Endothelial cell of umbilical vein (primary cell): ENCODE measurements at regions of chr2 and their contacts with region 1.

Region 1: DNA sequence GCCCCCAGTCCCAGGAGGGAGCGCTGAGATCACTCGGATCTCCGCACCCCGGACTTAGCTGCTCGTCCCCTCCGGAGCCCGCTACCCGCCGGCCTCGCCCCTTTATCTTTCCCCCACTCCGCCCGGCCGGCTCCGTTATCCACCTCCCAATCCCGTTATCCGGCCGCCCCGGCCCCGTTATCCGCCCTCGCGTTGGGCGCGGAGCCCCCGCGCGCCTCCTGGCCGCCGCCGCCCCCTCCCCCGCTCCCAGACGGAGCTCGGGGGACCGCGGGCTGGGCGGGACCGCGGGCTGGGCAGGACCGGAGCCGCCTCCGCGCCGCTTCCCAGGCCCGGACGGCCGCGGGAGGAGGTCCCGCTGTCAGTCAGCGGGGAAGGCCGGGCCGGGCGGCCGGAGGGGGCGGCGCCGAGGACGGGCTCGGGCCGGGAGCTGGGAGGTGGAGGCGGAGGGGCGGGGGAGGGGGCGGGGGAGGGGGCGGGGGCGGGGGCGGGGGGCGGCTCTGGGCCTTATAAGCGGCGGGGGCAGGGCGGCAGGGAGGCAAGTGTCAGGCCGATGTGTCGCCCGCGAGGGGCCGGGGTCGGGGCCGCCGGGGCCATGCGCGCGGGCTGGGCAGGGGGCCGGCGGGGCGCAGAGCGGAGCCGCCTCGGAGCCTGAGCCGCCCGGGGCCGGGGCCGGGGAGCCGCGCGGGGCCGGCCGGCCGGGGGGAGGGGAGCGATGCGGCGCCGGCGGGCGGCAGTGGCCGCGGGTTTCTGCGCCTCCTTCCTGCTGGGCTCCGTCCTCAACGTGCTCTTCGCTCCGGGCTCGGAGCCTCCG is at the start of gene PKDCC:
- DNase-seq: peak; percentile 62
- H3K4me3 ChIP-seq: peak within 1 kb of the TSS; percentile 42 to 58 (median 51)
- H3K27ac ChIP-seq: no peak within 1 kb of the TSS
- H3K4me1 ChIP-seq: peaks cover 9% of the 10 kb centered on the region
- H3K27me3 ChIP-seq: peaks cover 14 to 21% of the 10 kb centered on the region in 2 experiments
- CTCF ChIP-seq: no peak
- POLR2A ChIP-seq: no peak
- total RNA-seq, gene PKDCC: 5.9 and 6.9 TPM in 2 replicates

Region 2: DNA sequence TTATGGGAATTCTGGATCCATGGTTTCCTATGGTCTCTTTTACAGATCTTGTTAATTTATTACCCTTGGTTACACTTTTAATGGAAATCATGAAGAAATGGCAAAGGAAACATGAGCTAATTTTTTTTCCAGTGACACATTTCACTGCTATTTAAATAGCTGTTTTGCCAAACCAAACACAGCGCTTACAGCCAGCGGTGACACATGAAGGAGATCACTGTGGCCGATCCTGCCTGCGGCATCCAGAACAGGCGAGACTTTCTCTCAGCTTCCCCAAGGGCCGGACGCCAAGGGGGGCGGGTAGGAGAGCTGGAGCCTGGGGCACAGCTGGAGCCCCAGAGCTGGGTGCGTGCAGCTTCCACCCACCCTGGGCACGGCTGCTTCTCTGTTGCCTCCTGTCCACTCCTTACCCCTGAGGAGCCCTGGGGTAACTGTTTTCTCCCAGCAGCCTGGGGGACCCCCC is 81.2 kb before region 1 on chr2:
- CTCF ChIA-PET with region 1: no interaction called
- POLR2A ChIA-PET with region 1: interaction called, 4 read pairs
- dilution Hi-C with region 1: no loop called
- intact Hi-C with region 1: loop called (anchors 1 kb)
- DNase-seq: peak; percentile 93
- H3K4me3 ChIP-seq: no peak overlapping the region
- H3K27ac ChIP-seq: peak overlapping the region; percentile 60
- H3K4me1 ChIP-seq: peaks cover 24% of the 10 kb centered on the region
- H3K27me3 ChIP-seq: no peaks in the 10 kb centered on the region
- CTCF ChIP-seq: no peak
- POLR2A ChIP-seq: no peak

Region 3: GRCh38 chr2:42025151-42025582 is 22.5 kb before region 1 on chr2:
- CTCF ChIA-PET with region 1: interaction called, 11 read pairs
- POLR2A ChIA-PET with region 1: interaction called, 5 read pairs
- dilution Hi-C with region 1: no loop called
- intact Hi-C with region 1: loop called (anchors 2 kb)
- DNase-seq: peak; percentile 79
- H3K4me3 ChIP-seq: no peak overlapping the region
- H3K27ac ChIP-seq: peak overlapping the region; percentile 7
- H3K4me1 ChIP-seq: peaks cover 16% of the 10 kb centered on the region
- H3K27me3 ChIP-seq: no peaks in the 10 kb centered on the region
- CTCF ChIP-seq: no peak
- POLR2A ChIP-seq: no peak

Region 4: GRCh38 chr2:42060718-42061619 is 13.3 kb after region 1 on chr2:
- CTCF ChIA-PET with region 1: no interaction called
- POLR2A ChIA-PET with region 1: no interaction called
- dilution Hi-C with region 1: no loop called
- intact Hi-C with region 1: loop called (anchors 1 kb)
- DNase-seq: no peak
- H3K4me3 ChIP-seq: no peak overlapping the region
- H3K27ac ChIP-seq: no peak overlapping the region
- H3K4me1 ChIP-seq: no peaks in the 10 kb centered on the region
- H3K27me3 ChIP-seq: no peaks in the 10 kb centered on the region
- CTCF ChIP-seq: no peak
- POLR2A ChIP-seq: no peak

Region 5: GRCh38 chr2:42214669-42215068 is 167.0 kb after region 1 on chr2:
- CTCF ChIA-PET with region 1: no interaction called
- POLR2A ChIA-PET with region 1: no interaction called
- dilution Hi-C with region 1: no loop called
- intact Hi-C with region 1: no loop called
- DNase-seq: no peak
- H3K4me3 ChIP-seq: no peak overlapping the region
- H3K27ac ChIP-seq: no peak overlapping the region
- H3K4me1 ChIP-seq: no peaks in the 10 kb centered on the region
- H3K27me3 ChIP-seq: no peaks in the 10 kb centered on the region
- CTCF ChIP-seq: no peak
- POLR2A ChIP-seq: no peak

Region 6: DNA sequence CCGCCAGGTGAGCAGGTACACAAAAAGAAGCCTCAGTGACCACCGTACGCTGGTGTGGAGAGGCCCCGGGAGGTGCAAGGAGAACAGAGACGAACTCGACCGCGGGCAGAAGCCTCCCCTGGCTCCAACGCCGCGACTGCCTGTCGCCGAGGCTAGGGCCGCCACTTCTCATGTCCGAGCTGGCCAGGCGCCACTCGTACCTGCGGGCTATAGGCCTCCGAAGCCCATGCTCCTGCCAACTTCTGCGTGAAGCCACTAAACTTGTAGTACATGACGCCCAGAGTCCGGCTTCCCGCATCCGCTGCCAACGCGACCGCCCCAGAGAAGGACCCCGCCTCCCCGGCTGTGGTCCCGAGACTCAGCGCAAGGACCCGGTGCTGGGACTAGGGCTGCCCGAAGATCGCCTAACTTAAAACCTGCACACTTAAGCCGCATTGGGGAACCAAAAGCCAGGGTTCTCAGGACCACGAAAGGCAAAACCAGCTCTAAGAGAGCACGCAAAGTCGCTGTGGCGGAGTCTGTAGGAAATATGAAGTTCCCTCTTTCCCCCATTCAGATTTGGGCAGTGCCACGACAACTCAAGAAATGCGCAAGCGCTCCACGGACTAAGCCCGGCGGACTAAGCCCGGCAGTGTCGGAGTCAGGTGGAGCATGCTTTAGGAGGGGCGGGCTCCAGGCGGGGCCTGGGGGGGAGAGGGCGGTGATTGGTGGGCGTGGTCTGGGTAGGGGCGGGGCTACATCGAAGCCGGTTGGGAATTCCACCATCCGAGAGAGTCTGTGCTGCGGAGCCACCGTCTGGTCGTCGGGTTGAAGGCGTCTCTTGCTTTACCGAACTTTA is 313.4 kb after region 1 on chr2 and contains the start of gene COX7A2L:
- CTCF ChIA-PET with region 1: no interaction called
- POLR2A ChIA-PET with region 1: no interaction called
- dilution Hi-C with region 1: no loop called
- intact Hi-C with region 1: loop called (anchors 2 kb)
- DNase-seq: peak; percentile 97
- H3K4me3 ChIP-seq: peak within 1 kb of the TSS; percentile 61 to 92 (median 77)
- H3K27ac ChIP-seq: peak within 1 kb of the TSS; percentile 97
- H3K4me1 ChIP-seq: peaks cover 18% of the 10 kb centered on the region
- H3K27me3 ChIP-seq: peaks cover 1 to 2% of the 10 kb centered on the region in 2 experiments
- CTCF ChIP-seq: peak in 1 of 2 donors; percentile 33
- POLR2A ChIP-seq: peak; percentile 73
- total RNA-seq, gene COX7A2L: 94.2 and 101 TPM in 2 replicates